Psoas muscle (tissue), 8 donors: ENCODE measurements at regions of chr18 and their contacts with region 1.

Region 1: DNA sequence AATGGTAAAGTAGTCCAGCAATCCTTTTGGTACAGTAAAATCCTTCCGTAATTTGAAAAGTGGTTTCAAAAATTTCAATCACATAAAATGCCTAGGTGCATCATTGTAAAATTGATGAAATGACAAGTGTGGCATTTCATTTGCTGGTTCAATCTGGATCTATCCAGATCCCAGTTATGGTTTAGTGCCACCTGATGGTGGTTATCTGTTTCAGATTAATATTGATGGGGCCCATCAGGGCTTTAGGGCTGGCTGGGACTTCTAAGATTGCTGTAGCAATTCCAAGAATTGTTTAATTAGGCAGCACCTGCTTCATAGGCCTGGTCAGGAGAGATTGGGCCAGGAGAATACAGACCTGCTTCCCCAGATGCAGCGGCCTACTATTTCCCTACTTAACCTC is 55.5 kb upstream of the PIK3C3 start:
- DNase-seq: no peak
- ATAC-seq: no peak
- H3K4me3 ChIP-seq: no peak overlapping the region
- H3K27ac ChIP-seq: no peak overlapping the region
- H3K4me1 ChIP-seq: no peaks in the 10 kb centered on the region
- H3K27me3 ChIP-seq: no peaks in the 10 kb centered on the region
- CTCF ChIP-seq: no peak

Region 2: DNA sequence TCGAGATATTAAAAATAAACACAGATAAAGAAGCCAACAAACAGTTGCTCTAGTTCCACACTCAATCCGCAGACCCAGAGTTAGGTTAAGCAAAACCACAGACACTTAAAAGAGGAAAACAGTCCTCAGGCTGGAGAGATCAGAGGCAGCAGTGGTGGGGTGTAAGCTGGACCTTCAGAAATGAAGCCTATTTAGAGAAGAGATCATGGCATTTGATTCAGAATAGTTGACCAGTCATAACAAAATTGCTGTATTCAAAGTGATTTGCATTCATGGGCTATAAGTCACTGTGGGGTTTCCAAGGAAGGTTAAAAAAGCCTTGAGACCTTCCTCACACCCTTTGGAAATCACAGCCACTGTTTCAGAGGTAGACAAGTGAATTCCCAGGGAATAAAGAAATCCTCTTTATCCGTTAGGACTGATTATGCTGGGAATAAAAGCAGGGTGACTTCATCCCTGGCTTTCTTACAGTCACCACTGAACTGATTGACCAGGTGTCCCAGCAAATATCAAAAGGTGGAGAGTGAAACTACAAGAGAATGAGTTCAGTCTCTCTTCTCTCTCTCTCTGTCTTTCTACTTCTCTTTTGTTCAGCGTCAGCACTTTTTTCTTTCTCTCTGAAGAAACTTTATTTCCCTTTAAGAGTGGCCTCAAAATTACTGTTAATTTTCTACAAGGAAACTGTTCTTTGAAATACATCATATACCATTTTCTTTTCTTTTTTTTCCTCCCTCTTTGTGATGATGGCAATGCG is 116.3 kb before region 1 on chr18:
- intact Hi-C with region 1: no loop called
- DNase-seq: no peak
- ATAC-seq: no peak
- H3K4me3 ChIP-seq: no peak overlapping the region
- H3K27ac ChIP-seq: no peak overlapping the region
- H3K4me1 ChIP-seq: no peaks in the 10 kb centered on the region
- H3K27me3 ChIP-seq: no peaks in the 10 kb centered on the region
- CTCF ChIP-seq: no peak

Region 3: DNA sequence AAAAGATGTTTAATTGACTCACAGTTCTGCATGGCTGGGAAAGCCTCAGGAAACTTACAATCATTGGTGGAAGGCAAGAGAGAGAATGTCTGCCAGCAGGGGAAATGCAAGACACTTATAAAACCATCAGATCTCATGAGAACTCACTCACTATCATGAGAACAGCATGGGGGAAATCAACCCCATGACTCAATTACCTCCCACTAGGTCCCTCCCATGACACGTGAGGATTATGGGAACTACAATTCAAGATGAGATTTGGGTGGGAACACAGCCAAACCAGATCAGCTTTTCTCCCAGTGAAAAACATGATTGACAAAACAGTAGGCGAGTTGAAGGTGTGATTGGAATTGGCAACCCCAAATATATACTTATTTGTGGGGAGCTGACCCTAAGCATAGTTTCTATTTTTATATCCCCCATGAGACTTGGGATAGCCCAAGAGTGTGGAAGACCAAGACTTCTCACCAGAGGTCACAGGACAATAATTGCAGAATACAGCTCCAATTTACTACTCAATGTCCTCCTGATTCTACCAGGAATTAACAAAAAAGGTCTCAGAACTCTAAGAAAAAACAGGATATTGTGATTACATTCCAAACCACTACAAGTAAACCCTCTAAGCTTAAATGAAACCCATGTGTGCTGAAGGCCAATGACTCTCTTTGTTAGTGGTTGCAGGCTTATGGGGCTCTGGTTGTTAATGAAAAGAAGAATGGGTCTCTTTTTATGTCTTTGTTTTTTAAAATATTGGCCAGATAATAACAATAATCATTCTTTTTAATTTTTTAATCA is 40.6 kb before region 1 on chr18:
- intact Hi-C with region 1: no loop called
- DNase-seq: no peak
- ATAC-seq: no peak
- H3K4me3 ChIP-seq: no peak overlapping the region
- H3K27ac ChIP-seq: no peak overlapping the region
- H3K4me1 ChIP-seq: no peaks in the 10 kb centered on the region
- H3K27me3 ChIP-seq: no peaks in the 10 kb centered on the region
- CTCF ChIP-seq: no peak

Region 4: DNA sequence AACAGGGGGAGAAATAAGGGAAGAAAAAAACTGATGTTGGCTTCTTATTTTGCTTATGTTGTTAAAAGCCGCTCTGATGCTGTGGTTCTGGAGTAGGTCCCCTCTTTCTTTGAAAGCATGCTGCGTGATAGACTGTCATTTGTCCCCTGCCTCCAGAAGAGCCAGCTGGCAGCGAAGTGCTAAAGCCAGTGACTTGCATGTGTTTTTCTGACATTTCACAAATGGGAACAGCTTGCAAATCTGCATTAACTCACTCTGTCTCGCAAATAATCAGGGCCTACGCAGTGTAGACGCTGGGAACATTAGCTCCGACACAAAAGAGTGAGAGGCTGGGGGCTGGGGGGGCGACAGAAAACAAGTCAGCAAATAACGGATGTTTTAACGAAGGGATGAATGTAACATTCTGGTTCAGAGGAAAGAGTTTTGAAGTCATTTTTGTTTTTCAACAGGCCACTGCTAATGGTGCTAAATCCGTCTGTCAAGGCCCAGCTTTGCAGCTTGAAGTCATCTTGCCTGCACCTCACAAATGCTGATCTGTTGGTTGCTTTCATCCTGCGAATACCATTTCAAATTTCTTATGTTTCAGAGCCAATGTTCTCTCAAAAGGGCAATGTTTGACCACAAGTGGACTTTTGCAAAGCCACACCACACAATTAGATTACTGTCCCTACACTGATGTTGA is 13.3 kb before region 1 on chr18:
- intact Hi-C with region 1: loop called in 1 of 2 experiments (anchors 1 kb)
- DNase-seq: no peak
- ATAC-seq: no peak
- H3K4me3 ChIP-seq: no peak overlapping the region
- H3K27ac ChIP-seq: no peak overlapping the region
- H3K4me1 ChIP-seq: no peaks in the 10 kb centered on the region
- H3K27me3 ChIP-seq: peaks cover 0 to 3% (median 0%) of the 10 kb centered on the region in 3 donors
- CTCF ChIP-seq: no peak

Region 5: DNA sequence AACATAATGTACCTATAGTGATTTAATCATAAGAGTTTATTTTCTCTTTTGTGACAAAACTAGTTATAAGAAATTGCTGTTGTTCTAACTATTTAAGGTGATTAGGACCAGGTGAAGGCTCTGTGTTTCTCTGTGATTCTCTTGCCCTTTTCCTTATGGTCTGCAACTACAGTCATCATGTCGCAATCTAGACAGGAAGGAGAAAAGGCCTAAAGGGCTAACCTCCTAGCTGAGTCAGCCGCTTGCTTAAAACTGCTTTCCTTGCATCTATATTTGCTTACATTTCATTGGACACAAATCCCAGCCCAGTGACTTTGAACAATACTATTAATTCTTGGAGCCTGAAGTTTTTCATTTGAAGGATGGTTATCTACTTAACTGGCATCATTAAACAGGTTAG is 148.6 kb after region 1 on chr18:
- intact Hi-C with region 1: no loop called
- DNase-seq: no peak
- ATAC-seq: no peak
- H3K4me3 ChIP-seq: no peak overlapping the region
- H3K27ac ChIP-seq: no peak overlapping the region
- H3K4me1 ChIP-seq: no peaks in the 10 kb centered on the region
- H3K27me3 ChIP-seq: no peaks in the 10 kb centered on the region
- CTCF ChIP-seq: no peak